ENCODE measurements at regions of chr10 and their contacts with region 1.

Region 1: GRCh38 chr10:74081192-74081803 is 69.3 kb downstream of the AP3M1 start:
- DNase-seq: peak; percentile 53 to 58
- H3K4me3 ChIP-seq: no peak overlapping the region
- H3K4me3 Mint-ChIP-seq: no peak overlapping the region
- H3K27ac Mint-ChIP-seq: no peak overlapping the region
- H3K4me1 ChIP-seq: peaks cover 19% of the 10 kb centered on the region
- H3K4me1 Mint-ChIP-seq: peaks cover 6% of the 10 kb centered on the region
- H3K27me3 ChIP-seq: no peaks in the 10 kb centered on the region
- H3K27me3 Mint-ChIP-seq: no peaks in the 10 kb centered on the region
- CTCF ChIP-seq: peak; percentile 76 to 77

Region 2: DNA sequence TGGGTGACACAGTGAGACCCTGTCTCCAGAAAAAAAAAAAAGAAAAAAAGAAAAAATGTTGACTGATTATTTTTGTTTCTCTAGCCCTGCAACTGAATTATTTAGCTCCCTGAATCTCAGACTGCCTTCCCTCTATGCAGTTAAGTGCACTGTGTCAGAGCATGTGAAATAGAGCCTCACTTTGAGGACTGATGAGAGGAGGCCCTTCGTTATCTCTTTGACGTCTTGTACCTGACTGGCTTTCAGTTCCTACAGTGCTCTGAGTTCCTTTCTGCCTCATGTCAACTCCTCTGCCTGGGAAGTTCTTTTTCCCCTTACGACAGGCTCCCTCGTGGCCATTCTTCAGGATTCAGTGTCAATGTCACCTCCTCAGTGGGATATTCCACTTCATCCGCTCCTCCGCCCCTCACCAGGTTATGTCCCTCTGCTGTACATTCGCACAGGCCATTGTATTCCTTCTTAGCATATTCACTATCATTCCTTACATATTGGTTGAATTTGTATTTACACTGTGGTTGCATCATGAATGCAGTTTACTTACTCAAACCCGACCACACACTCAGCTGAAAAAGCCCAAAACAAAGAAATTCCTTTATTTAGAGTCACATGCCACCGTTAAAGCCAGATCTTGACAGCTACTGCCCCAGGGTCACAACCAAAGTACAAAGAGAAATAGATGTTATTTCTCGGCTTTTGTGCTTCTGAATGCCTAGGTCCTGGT is 188.8 kb before region 1 on chr10:
- CTCF ChIA-PET with region 1: no interaction called
- POLR2A ChIA-PET with region 1: no interaction called
- intact Hi-C with region 1: no loop called
- DNase-seq: no peak
- H3K4me3 ChIP-seq: no peak overlapping the region
- H3K4me3 Mint-ChIP-seq: no peak overlapping the region
- H3K27ac Mint-ChIP-seq: no peak overlapping the region
- H3K4me1 ChIP-seq: peaks cover 16% of the 10 kb centered on the region
- H3K4me1 Mint-ChIP-seq: peaks cover 6% of the 10 kb centered on the region
- H3K27me3 ChIP-seq: no peaks in the 10 kb centered on the region
- H3K27me3 Mint-ChIP-seq: no peaks in the 10 kb centered on the region
- CTCF ChIP-seq: no peak

Region 3: GRCh38 chr10:73997787-73998622 is 83.3 kb before region 1 on chr10 and contains the start of gene VCL:
- CTCF ChIA-PET with region 1: interaction called, 6 read pairs
- POLR2A ChIA-PET with region 1: no interaction called
- intact Hi-C with region 1: loop called (anchors 5 kb)
- DNase-seq: peak; percentile 99 to 100
- H3K4me3 ChIP-seq: peak within 1 kb of the TSS; percentile 100
- H3K4me3 Mint-ChIP-seq: peak within 1 kb of the TSS; percentile 98
- H3K27ac Mint-ChIP-seq: peak within 1 kb of the TSS; percentile 96
- H3K4me1 ChIP-seq: peaks cover 32% of the 10 kb centered on the region
- H3K4me1 Mint-ChIP-seq: peaks cover 27% of the 10 kb centered on the region
- H3K27me3 ChIP-seq: no peaks in the 10 kb centered on the region
- H3K27me3 Mint-ChIP-seq: no peaks in the 10 kb centered on the region
- CTCF ChIP-seq: no peak
- total RNA-seq, gene VCL: 92.2 and 113 TPM in 2 replicates

Measured in Caco-2 (cell line).